ENCODE measurements at regions of chr11 and their contacts with region 1.

Region 1: DNA sequence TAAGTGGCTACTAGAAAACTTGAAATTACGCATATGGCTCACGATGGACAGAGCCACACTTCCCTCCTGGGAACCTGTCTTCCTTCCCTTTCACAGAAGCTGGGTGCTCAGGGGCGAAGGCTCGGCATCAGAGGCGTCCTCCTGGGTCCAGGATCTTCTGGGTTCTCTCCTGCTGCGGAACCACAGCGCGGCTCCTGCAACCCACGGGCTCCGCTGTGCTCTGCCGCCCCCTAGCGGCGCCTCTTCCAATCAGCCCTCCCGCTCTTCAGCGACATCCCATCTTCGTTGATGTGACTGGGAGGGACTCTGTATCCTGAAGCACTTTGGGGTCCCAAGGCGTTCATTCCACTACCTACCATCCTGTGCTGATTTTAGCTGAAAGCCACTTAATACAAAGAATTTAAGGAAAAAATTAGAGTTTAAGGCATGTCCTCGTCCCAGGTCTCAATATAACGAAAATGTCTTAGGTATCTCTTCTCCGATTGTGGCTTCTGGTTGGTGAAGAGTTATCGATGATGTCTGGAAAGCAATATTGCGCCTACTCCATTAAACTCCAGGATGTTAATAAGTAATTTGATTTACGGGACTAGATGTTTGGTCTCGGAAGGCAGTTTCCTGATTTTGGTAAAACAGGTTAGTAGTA is 14.8 kb upstream of the RPS3 start:
- DNase-seq: peak; percentile 91
- ATAC-seq: peak; percentile 92
- H3K4me3 ChIP-seq: no peak overlapping the region
- H3K27ac ChIP-seq: no peak overlapping the region
- H3K4me1 ChIP-seq: peaks cover 33% of the 10 kb centered on the region
- H3K27me3 ChIP-seq: no peaks in the 10 kb centered on the region
- CTCF ChIP-seq: peak; percentile 99

Region 2: DNA sequence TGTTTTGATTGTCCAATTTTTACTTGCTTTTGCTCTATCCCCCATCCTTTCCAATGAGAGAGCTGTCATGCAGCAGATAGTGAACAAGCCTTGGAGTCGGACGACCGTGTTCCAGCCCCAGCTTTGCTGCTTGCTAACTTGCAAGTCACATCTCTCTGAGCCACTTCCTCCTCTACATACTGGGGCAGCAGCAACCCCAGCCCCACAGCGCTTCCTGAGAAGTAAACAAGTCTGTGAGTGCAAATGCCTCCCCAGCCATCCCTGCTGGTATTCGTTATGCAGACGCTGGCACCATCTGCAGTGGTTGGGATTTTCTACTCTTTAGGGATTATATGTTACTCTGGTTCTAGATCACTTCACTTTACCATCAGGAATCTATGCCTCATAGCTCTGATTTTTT is 109.0 kb before region 1 on chr11:
- intact Hi-C with region 1: loop called (anchors 5 kb)
- DNase-seq: peak; percentile 69
- ATAC-seq: peak; percentile 37
- H3K4me3 ChIP-seq: no peak overlapping the region
- H3K27ac ChIP-seq: peak overlapping the region; percentile 56
- H3K4me1 ChIP-seq: peaks cover 14% of the 10 kb centered on the region
- H3K27me3 ChIP-seq: no peaks in the 10 kb centered on the region
- CTCF ChIP-seq: no peak

Region 3: DNA sequence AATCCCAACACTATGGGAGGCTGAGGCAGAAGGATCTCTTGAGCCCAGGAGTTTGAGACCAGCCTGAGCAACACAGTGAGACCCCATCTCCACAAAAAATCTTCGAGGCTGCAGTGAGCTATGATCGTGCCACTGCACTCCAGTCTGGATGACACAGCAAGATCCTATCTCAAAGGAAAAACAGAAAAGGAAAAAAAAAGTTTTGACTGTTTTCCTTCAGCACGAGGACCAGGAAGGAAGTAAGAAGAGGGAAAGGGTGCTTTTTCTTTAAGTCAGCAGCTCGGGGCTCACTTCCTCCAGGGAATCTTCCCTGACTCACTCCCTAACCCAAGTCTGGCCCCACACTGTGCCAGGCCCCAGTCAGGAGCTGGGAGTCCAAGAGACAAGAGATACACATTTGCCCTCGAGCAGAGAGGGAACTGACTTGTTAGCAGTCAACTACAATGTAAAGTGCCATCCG is 47.3 kb before region 1 on chr11:
- intact Hi-C with region 1: loop called (anchors 5 kb)
- DNase-seq: no peak
- ATAC-seq: peak; percentile 23
- H3K4me3 ChIP-seq: no peak overlapping the region
- H3K27ac ChIP-seq: peak overlapping the region; percentile 95
- H3K4me1 ChIP-seq: peaks cover 96% of the 10 kb centered on the region
- H3K27me3 ChIP-seq: no peaks in the 10 kb centered on the region
- CTCF ChIP-seq: no peak

Region 4: DNA sequence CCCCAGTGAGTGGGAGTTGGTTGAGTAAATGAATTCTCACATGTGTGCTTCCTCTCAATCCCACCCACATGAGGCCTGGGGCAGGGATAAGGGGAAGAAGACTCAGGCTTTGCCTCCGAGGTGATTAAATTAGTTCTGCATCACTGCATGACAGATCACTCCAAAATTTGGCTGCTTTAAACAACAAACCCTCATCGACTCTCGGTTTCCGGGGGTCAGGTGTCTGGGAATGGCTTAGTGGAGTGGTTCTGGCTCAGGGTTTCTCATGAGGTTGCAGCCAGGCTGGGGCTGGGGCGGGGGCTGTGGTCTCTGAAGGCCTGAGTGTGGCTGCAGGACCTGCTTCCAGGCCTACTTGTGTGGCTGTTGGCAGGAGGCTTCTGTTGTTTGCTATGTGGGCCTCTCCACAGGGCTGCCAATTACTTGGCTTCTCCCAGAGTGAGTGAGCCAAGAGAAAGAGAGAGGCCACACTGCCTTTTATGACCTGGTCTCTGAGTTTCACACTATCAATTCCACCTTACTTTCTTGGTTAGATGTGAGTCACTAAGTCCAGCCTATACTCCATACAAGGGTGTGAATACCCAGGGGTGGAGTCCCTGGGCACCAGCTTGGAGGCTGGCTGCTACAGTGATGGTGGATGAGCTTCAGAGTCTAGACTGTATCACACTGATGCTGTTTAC is 349.0 kb after region 1 on chr11:
- intact Hi-C with region 1: no loop called
- DNase-seq: peak; percentile 74
- ATAC-seq: peak; percentile 78
- H3K4me3 ChIP-seq: no peak overlapping the region
- H3K27ac ChIP-seq: no peak overlapping the region
- H3K4me1 ChIP-seq: peaks cover 5% of the 10 kb centered on the region
- H3K27me3 ChIP-seq: no peaks in the 10 kb centered on the region
- CTCF ChIP-seq: no peak